Activated CD4-positive, alpha-beta memory T cell treated with anti-CD3 and anti-CD28 coated beads for 36 hours (primary cell): ENCODE measurements at regions of chr1 and their contacts with region 1.

Region 1: DNA sequence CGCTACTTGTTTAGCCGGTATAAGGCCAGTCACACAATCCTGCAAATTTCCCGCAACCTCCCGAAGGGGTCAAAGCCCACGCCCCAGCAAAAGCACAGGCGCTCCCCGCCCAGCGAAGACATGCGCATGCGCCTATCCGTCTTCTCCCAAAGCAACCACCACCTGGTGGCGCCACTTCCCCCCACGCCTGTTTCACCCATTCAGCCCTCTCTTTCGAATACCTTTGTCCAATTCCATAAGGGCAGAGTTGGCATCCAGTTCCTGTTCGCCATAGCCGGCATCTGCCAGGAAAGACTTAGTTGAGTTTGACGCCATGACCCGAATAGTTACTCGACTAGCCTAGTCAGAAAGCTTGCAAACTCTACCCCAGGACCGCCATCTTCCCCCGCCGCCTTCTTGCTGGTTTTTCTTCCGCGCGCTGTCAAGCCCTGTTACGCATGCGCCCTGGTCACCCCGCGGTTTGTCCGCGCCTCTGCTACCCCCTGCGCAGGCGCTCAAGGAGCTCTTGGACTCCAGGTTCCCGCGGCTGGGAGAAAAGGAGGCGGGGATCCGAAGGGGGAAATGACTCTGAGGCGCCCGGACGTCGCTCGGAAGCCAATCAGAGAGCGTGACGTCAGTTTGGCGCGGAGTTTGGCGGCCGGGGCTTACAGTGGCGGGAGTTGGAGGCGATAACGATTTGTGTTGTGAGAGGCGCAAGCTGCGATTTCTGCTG is at the starts of genes DTL and INTS7:
- DNase-seq: peak; percentile 99
- H3K4me3 Mint-ChIP-seq: peak within 1 kb of the TSS; percentile 97
- H3K27ac Mint-ChIP-seq: peak within 1 kb of the TSS; percentile 99
- H3K4me1 Mint-ChIP-seq: peaks cover 61% of the 10 kb centered on the region
- H3K27me3 Mint-ChIP-seq: peaks cover 2% of the 10 kb centered on the region
- total RNA-seq, gene DTL: 82.2 to 88.2 TPM
- total RNA-seq, gene INTS7: 19.3 to 19.6 TPM

Region 2: DNA sequence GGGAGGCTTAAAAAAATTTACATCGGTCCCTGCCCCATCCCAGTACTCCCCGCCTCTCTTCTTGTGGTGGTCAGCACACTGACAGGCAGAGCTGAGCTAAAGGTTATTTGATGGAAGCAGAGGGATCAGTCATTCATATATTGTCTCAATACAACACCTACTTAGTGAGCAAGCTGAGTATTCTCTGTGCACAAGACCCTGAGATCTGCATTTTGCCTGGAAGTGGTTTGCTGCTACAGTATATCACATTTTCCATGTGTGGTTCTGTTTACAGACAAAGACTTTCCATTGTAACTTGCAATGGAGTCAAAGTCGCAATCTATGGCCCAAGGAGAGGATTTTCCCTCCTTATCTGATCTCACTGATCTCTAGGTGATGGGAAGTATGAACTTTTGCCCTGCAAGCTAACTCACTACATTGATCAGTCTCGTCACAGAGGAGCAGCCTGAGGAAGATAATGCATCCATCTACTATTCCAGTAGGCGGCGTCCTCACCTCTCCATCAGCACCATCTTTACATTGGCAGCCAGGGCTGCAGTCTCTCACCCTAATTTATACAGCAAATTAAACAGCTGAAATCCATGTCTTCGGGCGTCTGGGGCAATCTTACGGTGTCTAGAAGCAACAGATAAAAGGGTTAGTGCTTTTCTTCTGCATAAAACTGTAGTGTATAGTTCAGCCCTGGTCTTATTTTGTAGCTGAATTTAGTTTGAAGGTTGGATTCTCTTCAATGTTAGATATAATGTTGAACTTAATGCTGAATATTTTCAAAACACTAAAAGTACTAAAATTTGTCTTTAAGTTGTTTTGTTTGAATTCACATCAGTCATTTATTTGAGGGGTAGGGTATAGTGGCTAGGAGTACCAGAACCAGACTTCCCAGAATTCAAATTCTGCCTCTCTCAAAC is 711.9 kb before region 1 on chr1:
- CTCF ChIA-PET with region 1: interaction called, 4 read pairs
- POLR2A ChIA-PET with region 1: no interaction called
- intact Hi-C with region 1: loop called (anchors 10 kb)
- DNase-seq: peak; percentile 78
- H3K4me3 Mint-ChIP-seq: no peak overlapping the region
- H3K27ac Mint-ChIP-seq: peak overlapping the region; percentile 68
- H3K4me1 Mint-ChIP-seq: peaks cover 55% of the 10 kb centered on the region
- H3K27me3 Mint-ChIP-seq: no peaks in the 10 kb centered on the region

Region 3: GRCh38 chr1:211680752-211681327 is 354.4 kb before region 1 on chr1:
- CTCF ChIA-PET with region 1: interaction called, 56 read pairs
- POLR2A ChIA-PET with region 1: interaction called, 8 read pairs
- intact Hi-C with region 1: loop called (anchors 1 kb)
- DNase-seq: peak; percentile 83
- H3K4me3 Mint-ChIP-seq: no peak overlapping the region
- H3K27ac Mint-ChIP-seq: peak overlapping the region; percentile 69
- H3K4me1 Mint-ChIP-seq: peaks cover 9% of the 10 kb centered on the region
- H3K27me3 Mint-ChIP-seq: no peaks in the 10 kb centered on the region

Region 4: DNA sequence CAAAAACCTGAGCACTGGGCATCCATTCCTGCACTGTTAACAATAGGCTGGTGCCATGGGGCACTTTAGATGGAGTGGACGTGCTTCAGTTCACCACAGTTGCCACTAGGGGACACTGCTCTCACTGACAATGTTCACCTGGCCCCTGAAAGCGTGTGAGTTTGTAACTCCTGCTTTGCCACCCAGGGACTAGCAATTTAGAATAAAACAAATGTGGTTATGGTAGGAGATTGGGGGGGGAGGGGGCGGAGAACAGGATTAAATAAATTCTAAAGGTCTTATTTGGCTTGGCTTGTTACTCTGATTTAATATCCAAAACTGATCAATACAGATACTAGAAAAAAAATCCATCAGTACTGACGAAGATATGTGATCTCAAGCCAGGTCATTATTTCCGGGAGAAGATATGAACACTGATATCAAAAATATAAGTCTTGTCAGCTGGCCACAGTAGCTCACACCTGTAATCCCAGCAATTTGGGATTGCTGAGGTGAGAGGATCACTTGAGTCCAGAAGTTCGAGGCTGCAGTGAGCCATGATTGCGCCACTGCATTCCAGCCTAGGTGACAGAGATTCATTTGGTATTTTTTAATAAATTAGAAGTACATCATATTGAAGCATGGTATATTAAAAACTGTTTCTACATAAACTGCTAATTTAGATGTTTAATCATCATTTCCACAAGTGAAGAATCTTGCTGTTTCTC is 23.1 kb before region 1 on chr1:
- CTCF ChIA-PET with region 1: interaction called, 24 read pairs
- POLR2A ChIA-PET with region 1: interaction called, 5 read pairs
- intact Hi-C with region 1: loop called (anchors 1 kb)
- DNase-seq: peak; percentile 78
- H3K4me3 Mint-ChIP-seq: no peak overlapping the region
- H3K27ac Mint-ChIP-seq: no peak overlapping the region
- H3K4me1 Mint-ChIP-seq: no peaks in the 10 kb centered on the region
- H3K27me3 Mint-ChIP-seq: no peaks in the 10 kb centered on the region

Region 5: DNA sequence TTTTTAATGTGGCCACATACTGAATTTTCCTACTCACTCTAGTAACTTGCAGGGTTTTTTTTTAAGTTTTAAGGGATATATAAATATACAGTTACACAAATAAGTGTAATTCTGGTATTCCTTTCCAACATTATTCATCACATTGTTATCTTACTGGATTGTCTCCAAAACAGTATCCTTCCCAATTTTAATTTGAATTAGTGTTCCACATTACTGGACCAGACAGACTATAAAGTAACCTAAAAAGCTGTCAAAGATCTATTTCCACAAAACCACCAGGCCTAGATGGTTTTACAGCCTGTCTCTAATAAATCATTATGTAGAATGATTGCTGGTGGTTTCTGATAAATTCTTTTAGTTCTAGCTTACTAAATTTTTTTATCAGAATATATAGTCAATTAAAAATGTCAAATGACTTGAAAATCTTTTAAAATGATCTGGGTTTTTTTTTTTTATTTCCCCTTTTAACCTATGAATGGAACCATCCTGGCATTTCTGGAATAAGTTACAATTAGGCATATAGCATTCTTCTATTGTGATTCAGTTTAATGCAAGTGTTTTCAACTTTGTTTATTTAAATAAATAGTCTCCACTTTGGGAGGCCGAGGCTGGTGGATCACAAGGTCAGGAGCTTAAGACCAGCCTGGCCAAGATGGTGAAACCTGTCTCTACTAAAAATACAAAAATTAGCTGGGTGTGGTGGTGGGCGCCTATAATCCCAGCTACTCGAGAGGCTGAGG is 320.1 kb after region 1 on chr1:
- CTCF ChIA-PET with region 1: interaction called, 11 read pairs
- POLR2A ChIA-PET with region 1: no interaction called
- intact Hi-C with region 1: loop called (anchors 2 kb)
- DNase-seq: no peak
- H3K4me3 Mint-ChIP-seq: no peak overlapping the region
- H3K27ac Mint-ChIP-seq: no peak overlapping the region
- H3K4me1 Mint-ChIP-seq: peaks cover 22% of the 10 kb centered on the region
- H3K27me3 Mint-ChIP-seq: no peaks in the 10 kb centered on the region

Region 6: DNA sequence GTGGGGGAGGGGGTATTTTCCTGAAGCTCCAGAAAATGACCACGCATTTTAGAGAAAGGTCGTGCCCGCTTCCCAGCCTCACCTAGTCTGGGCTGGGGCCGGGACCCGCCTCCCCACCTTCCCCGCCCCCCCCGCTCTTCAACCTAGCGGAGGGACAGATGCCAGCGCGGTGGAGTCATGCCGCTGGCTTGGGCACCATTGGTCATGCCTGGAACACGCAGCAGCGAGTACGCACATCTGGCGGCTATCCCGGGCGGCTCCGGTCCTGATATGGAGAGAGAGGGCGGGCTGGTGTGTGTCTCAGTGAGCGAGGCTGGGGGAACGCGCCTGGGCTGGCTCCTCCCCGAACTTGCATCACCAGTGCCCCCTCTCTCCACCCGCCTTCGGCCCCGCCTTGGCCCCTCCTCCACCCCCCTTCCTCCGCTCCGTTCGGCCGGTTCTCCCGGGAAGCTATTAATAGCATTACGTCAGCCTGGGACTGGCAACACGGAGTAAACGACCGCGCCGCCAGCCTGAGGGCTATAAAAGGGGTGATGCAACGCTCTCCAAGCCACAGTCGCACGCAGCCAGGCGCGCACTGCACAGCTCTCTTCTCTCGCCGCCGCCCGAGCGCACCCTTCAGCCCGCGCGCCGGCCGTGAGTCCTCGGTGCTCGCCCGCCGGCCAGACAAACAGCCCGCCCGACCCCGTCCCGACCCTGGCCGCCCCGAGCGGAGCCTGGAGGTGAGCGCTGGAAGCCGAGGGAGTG is 573.1 kb after region 1 on chr1 and contains the start of gene ATF3:
- CTCF ChIA-PET with region 1: interaction called, 6 read pairs
- POLR2A ChIA-PET with region 1: no interaction called
- intact Hi-C with region 1: loop called (anchors 10 kb)
- DNase-seq: peak; percentile 97
- H3K4me3 Mint-ChIP-seq: peak within 1 kb of the TSS; percentile 91
- H3K27ac Mint-ChIP-seq: peak within 1 kb of the TSS; percentile 90
- H3K4me1 Mint-ChIP-seq: peaks cover 52% of the 10 kb centered on the region
- H3K27me3 Mint-ChIP-seq: peaks cover 36% of the 10 kb centered on the region
- total RNA-seq, gene ATF3: 49.7 to 51.5 TPM

Region 7: DNA sequence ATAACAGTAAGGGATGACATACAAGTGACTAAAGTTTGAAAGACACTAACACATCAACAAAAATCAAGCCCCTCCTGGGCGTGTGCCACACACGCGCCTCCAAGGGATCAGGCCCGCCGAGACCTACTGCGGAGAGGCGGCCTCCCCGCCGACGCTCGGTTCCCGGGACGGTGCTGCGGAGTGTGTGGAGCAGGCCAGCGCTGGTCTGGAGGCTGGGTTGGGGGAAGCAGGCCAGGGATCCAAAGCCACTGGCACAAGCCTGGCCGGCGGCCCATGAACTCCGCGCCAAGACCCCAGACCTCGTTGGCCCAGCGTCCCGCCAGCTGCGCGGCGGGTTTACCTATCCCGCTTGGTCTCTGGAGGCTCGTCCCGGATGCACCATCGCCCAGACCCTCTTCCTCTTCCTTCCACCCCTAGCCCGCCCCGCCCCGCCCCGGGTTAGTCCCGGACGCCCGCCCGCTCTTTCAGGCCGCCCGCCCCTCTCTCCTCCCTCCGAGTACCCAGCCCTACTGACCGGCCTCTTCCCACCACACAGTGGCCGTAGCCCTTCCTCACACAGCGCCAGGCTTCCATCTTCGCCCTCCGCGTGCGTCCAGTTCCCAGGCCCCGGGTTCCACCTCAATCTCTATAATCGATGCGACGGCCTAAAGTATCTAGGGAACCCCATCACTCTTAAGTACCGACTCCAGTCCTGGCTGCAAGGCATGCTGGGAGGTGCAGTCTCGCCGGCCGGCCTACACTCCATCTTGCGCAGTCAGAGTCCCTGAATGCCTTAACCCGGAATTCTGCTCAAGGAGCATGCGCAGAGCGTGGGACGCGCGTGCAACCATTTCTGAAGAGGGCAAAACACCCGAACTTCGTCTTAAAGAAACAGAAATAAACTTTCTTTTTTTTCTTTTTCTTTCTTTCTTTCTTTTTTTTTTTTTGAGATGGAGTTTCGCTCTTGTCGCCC is 980.1 kb after region 1 on chr1 and contains the start of gene ANGEL2:
- CTCF ChIA-PET with region 1: no interaction called
- POLR2A ChIA-PET with region 1: no interaction called
- intact Hi-C with region 1: loop called (anchors 10 kb)
- DNase-seq: peak; percentile 97
- H3K4me3 Mint-ChIP-seq: peak within 1 kb of the TSS; percentile 98
- H3K27ac Mint-ChIP-seq: peak within 1 kb of the TSS; percentile 99
- H3K4me1 Mint-ChIP-seq: peaks cover 30% of the 10 kb centered on the region
- H3K27me3 Mint-ChIP-seq: no peaks in the 10 kb centered on the region
- total RNA-seq, gene ANGEL2: 41.3 to 46.4 TPM